ENCODE measurements at regions of chr9 and their contacts with region 1.

Region 1: GRCh38 chr9:109843641-109844040 is 63.6 kb downstream of the PALM2AKAP2 start:
- DNase-seq: no peak
- H3K4me3 ChIP-seq: no peak overlapping the region
- H3K27ac ChIP-seq: no peak overlapping the region
- H3K27me3 ChIP-seq: no peaks in the 10 kb centered on the region
- CTCF ChIP-seq: no peak

Region 2: GRCh38 chr9:109781541-109782197 is 62.0 kb before region 1 on chr9:
- CTCF ChIA-PET with region 1: no interaction called
- POLR2A ChIA-PET with region 1: no interaction called
- DNase-seq: no peak
- H3K4me3 ChIP-seq: peak overlapping the region; percentile 88
- H3K27ac ChIP-seq: no peak overlapping the region
- H3K27me3 ChIP-seq: no peaks in the 10 kb centered on the region
- CTCF ChIP-seq: no peak

Region 3: GRCh38 chr9:109859433-109859832 is 15.8 kb after region 1 on chr9:
- CTCF ChIA-PET with region 1: interaction called, 10 read pairs
- POLR2A ChIA-PET with region 1: no interaction called
- DNase-seq: no peak
- H3K4me3 ChIP-seq: no peak overlapping the region
- H3K27ac ChIP-seq: no peak overlapping the region
- H3K27me3 ChIP-seq: no peaks in the 10 kb centered on the region
- CTCF ChIP-seq: peak; percentile 47